ENCODE measurements at regions of chr17 and their contacts with region 1.

Region 1: GRCh38 chr17:51153210-51154072 is at the start of gene NME1:
- DNase-seq: peak; percentile 91 to 98
- H3K4me3 ChIP-seq: peak within 1 kb of the TSS; percentile 73 to 92
- H3K27ac ChIP-seq: peak within 1 kb of the TSS; percentile 82 to 86
- H3K4me1 ChIP-seq: peaks cover 0 to 13% of the 10 kb centered on the region in 2 donors
- H3K27me3 ChIP-seq: no peaks in the 10 kb centered on the region
- CTCF ChIP-seq: peak; percentile 75 to 83 (median 80)
- total RNA-seq, gene NME1: 70.6 TPM

Region 2: GRCh38 chr17:50328363-50329325 is 824.8 kb before region 1 on chr17:
- intact Hi-C with region 1: no loop called
- DNase-seq: no peak
- H3K4me3 ChIP-seq: no peak overlapping the region
- H3K27ac ChIP-seq: no peak overlapping the region
- H3K4me1 ChIP-seq: no peaks in the 10 kb centered on the region
- H3K27me3 ChIP-seq: no peaks in the 10 kb centered on the region
- CTCF ChIP-seq: no peak

Region 3: GRCh38 chr17:50783193-50783660 is 370.2 kb before region 1 on chr17:
- intact Hi-C with region 1: loop called (anchors 10 kb)
- DNase-seq: peak in 1 of 2 donors; percentile 91
- H3K4me3 ChIP-seq: no peak overlapping the region
- H3K27ac ChIP-seq: no peak overlapping the region
- H3K4me1 ChIP-seq: peaks cover 0 to 4% of the 10 kb centered on the region in 2 donors
- H3K27me3 ChIP-seq: no peaks in the 10 kb centered on the region
- CTCF ChIP-seq: peak; percentile 98 to 100 (median 99)

Region 4: GRCh38 chr17:50853015-50853615 is 300.3 kb before region 1 on chr17:
- intact Hi-C with region 1: loop called (anchors 2 kb)
- DNase-seq: no peak
- H3K4me3 ChIP-seq: peak overlapping the region in 1 of 2 donors; percentile 60
- H3K27ac ChIP-seq: peak overlapping the region; percentile 79 to 83
- H3K4me1 ChIP-seq: no peaks in the 10 kb centered on the region
- H3K27me3 ChIP-seq: no peaks in the 10 kb centered on the region
- CTCF ChIP-seq: no peak

Region 5: GRCh38 chr17:50865984-50866774 is 287.3 kb before region 1 on chr17 and contains the start of gene TOB1:
- intact Hi-C with region 1: loop called (anchors 5 kb)
- DNase-seq: peak; percentile 92 to 99
- H3K4me3 ChIP-seq: peak within 1 kb of the TSS; percentile 98 to 99
- H3K27ac ChIP-seq: peak within 1 kb of the TSS; percentile 99 to 100
- H3K4me1 ChIP-seq: peaks cover 0 to 22% of the 10 kb centered on the region in 2 donors
- H3K27me3 ChIP-seq: no peaks in the 10 kb centered on the region
- CTCF ChIP-seq: no peak
- total RNA-seq, gene TOB1: 41.7 TPM

Region 6: DNA sequence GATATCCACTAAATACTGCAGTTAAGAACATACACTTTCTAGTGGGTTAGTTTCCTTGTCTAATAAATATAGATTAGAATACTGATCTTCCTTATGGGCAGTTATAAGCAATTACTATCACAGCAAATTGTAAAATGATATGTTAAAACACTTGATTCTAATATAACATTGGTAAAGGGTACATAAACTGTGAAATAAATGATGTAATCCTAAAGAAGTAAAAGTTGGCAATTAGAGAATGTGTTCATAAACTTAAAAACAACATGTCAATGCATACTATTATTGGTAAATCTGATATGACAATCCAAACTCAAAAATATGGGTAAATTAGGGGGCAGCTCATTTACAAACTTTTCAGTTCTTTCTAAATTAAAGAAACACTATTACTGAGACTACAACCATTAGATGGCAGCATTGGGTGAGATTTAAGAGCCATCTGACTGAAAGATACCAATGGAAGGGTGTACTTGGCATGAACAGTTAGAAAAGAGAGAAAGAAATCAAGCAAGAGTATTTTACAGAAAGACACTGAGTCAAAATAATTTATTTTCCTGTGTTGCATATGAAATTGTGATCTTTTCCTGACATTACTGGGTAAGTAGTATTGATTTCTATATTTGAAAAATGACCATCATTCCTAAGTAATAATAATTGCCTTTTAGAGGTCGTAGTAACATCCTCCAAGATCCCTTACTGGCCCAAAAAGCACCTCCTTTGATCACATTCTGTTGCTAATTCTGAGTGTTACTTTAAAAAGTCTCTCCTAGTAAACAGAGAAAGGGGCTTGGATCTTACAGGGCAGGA is 152.4 kb before region 1 on chr17:
- intact Hi-C with region 1: loop called (anchors 1 kb)
- DNase-seq: no peak
- H3K4me3 ChIP-seq: no peak overlapping the region
- H3K27ac ChIP-seq: peak overlapping the region in 1 of 2 donors; percentile 24
- H3K4me1 ChIP-seq: no peaks in the 10 kb centered on the region
- H3K27me3 ChIP-seq: no peaks in the 10 kb centered on the region
- CTCF ChIP-seq: peak; percentile 44 to 61 (median 47)

Region 7: DNA sequence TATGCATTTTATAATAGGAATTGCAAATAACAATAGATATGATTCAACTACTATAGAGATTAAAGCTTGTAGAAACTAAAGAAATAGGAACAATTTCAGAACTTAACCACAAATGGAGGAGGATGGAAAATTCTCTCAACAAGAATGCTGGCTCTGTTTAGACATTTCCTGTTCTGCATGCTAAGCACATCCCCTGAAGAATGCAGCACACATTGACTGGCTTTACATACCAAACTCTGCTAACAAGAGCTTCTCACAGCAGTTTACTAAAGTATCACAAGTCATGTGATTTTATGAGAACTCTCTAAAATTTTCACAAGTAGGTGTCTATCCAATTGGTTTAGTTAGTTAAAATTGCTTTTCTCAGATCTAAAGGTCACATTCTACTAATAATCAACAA is 118.0 kb before region 1 on chr17:
- intact Hi-C with region 1: no loop called
- DNase-seq: no peak
- H3K4me3 ChIP-seq: no peak overlapping the region
- H3K27ac ChIP-seq: no peak overlapping the region
- H3K4me1 ChIP-seq: no peaks in the 10 kb centered on the region
- H3K27me3 ChIP-seq: no peaks in the 10 kb centered on the region
- CTCF ChIP-seq: no peak

Region 8: DNA sequence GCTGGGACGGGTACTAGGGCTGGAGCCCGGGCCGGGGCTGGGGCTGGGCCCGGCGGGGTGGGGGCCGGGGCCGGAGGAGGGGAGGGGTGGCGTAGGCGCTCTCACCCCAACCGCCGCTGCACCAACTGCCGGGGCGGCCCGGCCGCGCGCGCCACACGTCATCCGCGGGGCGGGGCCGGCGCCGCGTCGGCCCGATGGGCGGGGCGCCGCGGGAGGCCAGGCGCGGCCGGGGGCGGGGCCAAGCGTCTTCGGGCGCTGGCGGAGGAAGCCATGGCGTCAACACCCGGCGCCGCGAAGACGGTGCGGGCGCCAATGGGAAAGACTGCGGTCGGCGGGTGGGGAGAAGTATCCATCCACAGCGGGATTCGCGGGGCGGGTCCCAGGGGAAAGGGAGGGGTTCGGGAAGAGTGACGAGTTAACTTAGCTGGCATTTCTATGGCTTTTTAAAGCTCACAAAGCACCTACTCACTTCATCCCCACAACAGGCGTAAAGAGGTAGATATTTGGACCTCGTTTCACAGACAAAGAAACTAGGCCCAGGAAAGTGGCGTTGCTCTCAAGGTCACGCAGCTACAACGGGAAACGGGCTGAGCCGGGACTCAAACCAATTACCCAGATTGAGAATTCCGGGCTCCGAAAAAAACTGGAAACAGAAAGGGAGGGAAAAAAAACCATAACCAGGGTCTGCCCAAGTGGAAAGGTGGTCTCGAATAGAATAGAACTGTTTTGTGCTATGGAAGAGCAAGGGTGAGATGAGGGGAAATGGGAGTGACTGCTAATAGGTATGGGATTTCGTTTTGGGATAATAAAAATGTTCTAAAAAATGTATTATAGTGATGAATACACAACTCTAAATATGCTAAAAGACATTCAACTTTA is 32.5 kb before region 1 on chr17 and contains the start of gene SPAG9:
- intact Hi-C with region 1: loop called (anchors 1 kb)
- DNase-seq: peak; percentile 85 to 98
- H3K4me3 ChIP-seq: peak within 1 kb of the TSS; percentile 99 to 100
- H3K27ac ChIP-seq: peak within 1 kb of the TSS; percentile 99
- H3K4me1 ChIP-seq: peaks cover 3 to 20% of the 10 kb centered on the region in 2 donors
- H3K27me3 ChIP-seq: no peaks in the 10 kb centered on the region
- CTCF ChIP-seq: no peak
- total RNA-seq, gene SPAG9: 41.3 TPM

Region 9: DNA sequence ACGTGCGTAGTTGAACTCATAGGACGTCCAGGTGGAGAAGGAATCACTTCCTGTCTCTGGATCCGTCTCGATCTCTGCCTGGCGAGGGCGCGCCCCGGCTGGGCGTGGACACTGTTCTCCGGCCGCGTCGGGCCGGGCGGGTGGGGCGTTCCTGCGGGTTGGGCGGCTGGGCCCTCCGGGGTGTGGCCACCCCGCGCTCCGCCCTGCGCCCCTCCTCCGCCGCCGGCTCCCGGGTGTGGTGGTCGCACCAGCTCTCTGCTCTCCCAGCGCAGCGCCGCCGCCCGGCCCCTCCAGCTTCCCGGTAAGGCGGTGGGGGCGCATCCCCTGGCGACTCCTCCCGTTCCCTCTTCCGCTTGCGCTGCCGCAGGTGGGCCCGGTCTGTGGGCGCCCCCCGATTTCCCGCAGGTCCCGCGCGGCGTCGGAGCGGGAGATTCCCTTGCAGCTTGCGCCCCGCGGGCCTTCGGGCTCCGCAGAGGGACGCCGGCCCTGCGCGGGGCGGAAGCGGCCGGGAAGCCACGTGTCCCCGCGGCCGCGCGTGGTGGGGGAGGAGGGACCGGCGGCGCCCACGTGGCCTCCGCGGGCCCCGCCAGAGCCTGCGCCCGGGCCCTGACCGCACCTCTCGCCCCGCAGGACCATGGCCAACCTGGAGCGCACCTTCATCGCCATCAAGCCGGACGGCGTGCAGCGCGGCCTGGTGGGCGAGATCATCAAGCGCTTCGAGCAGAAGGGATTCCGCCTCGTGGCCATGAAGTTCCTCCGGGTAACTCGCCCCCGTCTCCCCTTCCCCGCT is 13.0 kb after region 1 on chr17 and contains the start of gene NME2:
- intact Hi-C with region 1: loop called (anchors 2 kb)
- DNase-seq: peak; percentile 66 to 94
- H3K4me3 ChIP-seq: peak within 1 kb of the TSS; percentile 80 to 99
- H3K27ac ChIP-seq: peak within 1 kb of the TSS; percentile 97 to 98
- H3K4me1 ChIP-seq: peaks cover 0 to 10% of the 10 kb centered on the region in 2 donors
- H3K27me3 ChIP-seq: no peaks in the 10 kb centered on the region
- CTCF ChIP-seq: no peak
- total RNA-seq, gene NME2: 638 TPM